HepG2 (cell line): ENCODE measurements at regions of chr1 and their contacts with region 1.

Region 1: GRCh38 chr1:234709473-234710228 is 99.7 kb upstream of the IRF2BP2 start:
- DNase-seq: no peak
- ATAC-seq: peak; percentile 32
- H3K4me3 ChIP-seq: no peak overlapping the region
- H3K27ac ChIP-seq: no peak overlapping the region
- H3K4me1 ChIP-seq: peaks cover 49% of the 10 kb centered on the region
- H3K27me3 ChIP-seq: no peaks in the 10 kb centered on the region
- CTCF ChIP-seq: no peak
- EP300 ChIP-seq: no peak
- POLR2A ChIP-seq: no peak
- RAD21 ChIP-seq: no peak

Region 2: DNA sequence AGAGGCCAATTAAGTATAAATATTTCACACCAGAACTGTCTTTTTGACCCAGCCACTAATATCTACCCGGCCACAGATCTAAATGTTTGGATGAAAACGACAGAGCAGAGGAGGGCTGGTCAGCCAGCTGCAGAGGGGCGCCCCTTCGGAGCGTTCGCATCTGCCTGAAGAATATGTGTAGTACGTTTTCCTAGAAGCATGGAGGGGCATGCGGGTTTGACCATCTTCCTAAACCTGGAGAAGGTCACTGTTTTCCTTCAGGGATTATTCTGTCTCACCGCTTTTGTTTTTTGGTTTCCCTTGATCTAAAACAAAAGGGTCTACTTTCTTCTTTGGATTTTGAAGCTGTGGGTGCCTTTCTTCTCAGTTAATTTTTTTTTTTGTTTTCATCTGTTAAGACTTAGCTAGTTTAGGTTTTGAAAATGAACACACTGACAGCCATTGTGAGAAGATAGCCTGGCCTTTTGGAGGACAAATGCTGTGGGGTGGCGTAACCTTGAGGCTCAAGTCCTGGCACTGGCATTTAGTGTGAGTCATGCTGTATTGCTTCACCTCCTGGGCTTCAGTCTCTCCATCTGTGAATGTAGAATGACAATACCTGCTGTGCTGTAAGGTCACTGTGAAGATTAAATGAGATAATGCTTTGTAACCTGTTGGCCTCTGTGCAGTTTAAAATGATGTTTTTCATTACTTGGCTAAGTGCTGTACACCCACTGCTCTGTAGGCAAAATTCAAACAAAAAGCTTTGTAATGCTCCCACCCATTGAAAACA is 25.6 kb before region 1 on chr1:
- CTCF ChIA-PET with region 1: no interaction called
- POLR2A ChIA-PET with region 1: interaction called, 11 read pairs
- in situ Hi-C with region 1: no loop called
- intact Hi-C with region 1: no loop called
- DNase-seq: peak; percentile 97
- ATAC-seq: peak; percentile 100
- H3K4me3 ChIP-seq: no peak overlapping the region
- H3K27ac ChIP-seq: peak overlapping the region; percentile 87
- H3K4me1 ChIP-seq: peaks cover 21% of the 10 kb centered on the region
- H3K27me3 ChIP-seq: no peaks in the 10 kb centered on the region
- CTCF ChIP-seq: 0 out of 2 replicates have a peak, but pooled peaks have one; percentile 22
- EP300 ChIP-seq: peak; percentile 79 to 93; a peak in 3 of 4 replicates
- POLR2A ChIP-seq: no peak
- RAD21 ChIP-seq: no peak; the same call in 1 of the 2 replicates